MCF 10A (cell line): ENCODE measurements at regions of chr1 and their contacts with region 1.

Region 1: GRCh38 chr1:203038891-203039608 is 12.8 kb downstream of the PPFIA4 start:
- DNase-seq: peak; percentile 90
- H3K4me3 Mint-ChIP-seq: no peak overlapping the region
- H3K27ac Mint-ChIP-seq: no peak overlapping the region
- H3K4me1 Mint-ChIP-seq: peaks cover 18% of the 10 kb centered on the region
- H3K27me3 Mint-ChIP-seq: no peaks in the 10 kb centered on the region
- CTCF ChIP-seq: peak; percentile 100

Region 2: GRCh38 chr1:202553560-202554038 is 485.5 kb before region 1 on chr1:
- CTCF ChIA-PET with region 1: no interaction called
- POLR2A ChIA-PET with region 1: no interaction called
- intact Hi-C with region 1: no loop called
- DNase-seq: no peak
- H3K4me3 Mint-ChIP-seq: no peak overlapping the region
- H3K27ac Mint-ChIP-seq: no peak overlapping the region
- H3K4me1 Mint-ChIP-seq: peaks cover 5% of the 10 kb centered on the region
- H3K27me3 Mint-ChIP-seq: no peaks in the 10 kb centered on the region
- CTCF ChIP-seq: no peak

Region 3: GRCh38 chr1:203069030-203069747 is 30.1 kb after region 1 on chr1:
- CTCF ChIA-PET with region 1: interaction called, 250 read pairs
- POLR2A ChIA-PET with region 1: interaction called, 3 read pairs
- intact Hi-C with region 1: no loop called
- DNase-seq: no peak
- H3K4me3 Mint-ChIP-seq: no peak overlapping the region
- H3K27ac Mint-ChIP-seq: no peak overlapping the region
- H3K4me1 Mint-ChIP-seq: peaks cover 20% of the 10 kb centered on the region
- H3K27me3 Mint-ChIP-seq: peaks cover 10% of the 10 kb centered on the region
- CTCF ChIP-seq: no peak

Region 4: GRCh38 chr1:203117611-203118575 is 78.8 kb after region 1 on chr1:
- CTCF ChIA-PET with region 1: interaction called, 103 read pairs
- POLR2A ChIA-PET with region 1: interaction called, 4 read pairs
- intact Hi-C with region 1: loop called (anchors 2 kb)
- DNase-seq: peak; percentile 85
- H3K4me3 Mint-ChIP-seq: no peak overlapping the region
- H3K27ac Mint-ChIP-seq: no peak overlapping the region
- H3K4me1 Mint-ChIP-seq: peaks cover 10% of the 10 kb centered on the region
- H3K27me3 Mint-ChIP-seq: peaks cover 42% of the 10 kb centered on the region
- CTCF ChIP-seq: peak; percentile 99

Region 5: DNA sequence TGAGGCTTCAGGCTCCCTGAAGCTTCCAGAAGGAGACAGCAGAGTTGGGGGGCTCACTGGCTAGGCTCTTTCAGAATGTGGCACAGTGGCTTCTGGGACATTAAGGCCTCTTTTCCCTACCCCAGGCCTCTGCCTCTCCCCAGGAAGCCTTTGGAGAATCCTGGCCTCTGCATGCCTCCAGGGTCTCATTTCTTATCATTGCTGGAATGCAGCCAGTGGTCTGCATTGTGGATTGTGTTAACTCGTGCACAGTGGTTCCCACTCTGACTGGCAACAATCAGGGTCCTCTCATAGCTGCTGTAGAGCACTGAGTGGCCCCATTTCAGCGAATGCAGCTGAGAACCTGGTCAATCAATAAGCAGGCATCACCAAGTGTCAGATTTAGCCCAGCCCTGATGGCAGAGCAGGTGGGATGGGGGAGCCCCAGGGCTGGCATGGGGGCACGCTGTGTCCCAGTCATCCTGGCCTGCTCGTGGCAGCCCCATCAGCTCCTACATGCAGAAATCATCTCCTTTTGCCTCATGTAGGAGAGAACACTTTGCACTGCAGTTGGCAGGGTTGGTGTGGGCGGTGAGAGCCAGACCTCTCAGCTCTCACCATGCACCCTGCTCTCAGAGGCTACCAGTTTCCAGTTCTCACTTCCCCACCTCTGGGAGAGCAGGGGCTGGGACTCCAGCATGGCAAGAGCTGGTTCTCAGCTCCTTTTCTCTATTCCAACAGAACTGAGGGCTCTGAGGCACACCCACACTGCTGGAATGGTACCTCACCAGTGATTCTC is 101.9 kb after region 1 on chr1:
- CTCF ChIA-PET with region 1: interaction called, 17 read pairs
- POLR2A ChIA-PET with region 1: no interaction called
- intact Hi-C with region 1: no loop called
- DNase-seq: no peak
- H3K4me3 Mint-ChIP-seq: no peak overlapping the region
- H3K27ac Mint-ChIP-seq: no peak overlapping the region
- H3K4me1 Mint-ChIP-seq: peaks cover 3% of the 10 kb centered on the region
- H3K27me3 Mint-ChIP-seq: no peaks in the 10 kb centered on the region
- CTCF ChIP-seq: no peak

Region 6: DNA sequence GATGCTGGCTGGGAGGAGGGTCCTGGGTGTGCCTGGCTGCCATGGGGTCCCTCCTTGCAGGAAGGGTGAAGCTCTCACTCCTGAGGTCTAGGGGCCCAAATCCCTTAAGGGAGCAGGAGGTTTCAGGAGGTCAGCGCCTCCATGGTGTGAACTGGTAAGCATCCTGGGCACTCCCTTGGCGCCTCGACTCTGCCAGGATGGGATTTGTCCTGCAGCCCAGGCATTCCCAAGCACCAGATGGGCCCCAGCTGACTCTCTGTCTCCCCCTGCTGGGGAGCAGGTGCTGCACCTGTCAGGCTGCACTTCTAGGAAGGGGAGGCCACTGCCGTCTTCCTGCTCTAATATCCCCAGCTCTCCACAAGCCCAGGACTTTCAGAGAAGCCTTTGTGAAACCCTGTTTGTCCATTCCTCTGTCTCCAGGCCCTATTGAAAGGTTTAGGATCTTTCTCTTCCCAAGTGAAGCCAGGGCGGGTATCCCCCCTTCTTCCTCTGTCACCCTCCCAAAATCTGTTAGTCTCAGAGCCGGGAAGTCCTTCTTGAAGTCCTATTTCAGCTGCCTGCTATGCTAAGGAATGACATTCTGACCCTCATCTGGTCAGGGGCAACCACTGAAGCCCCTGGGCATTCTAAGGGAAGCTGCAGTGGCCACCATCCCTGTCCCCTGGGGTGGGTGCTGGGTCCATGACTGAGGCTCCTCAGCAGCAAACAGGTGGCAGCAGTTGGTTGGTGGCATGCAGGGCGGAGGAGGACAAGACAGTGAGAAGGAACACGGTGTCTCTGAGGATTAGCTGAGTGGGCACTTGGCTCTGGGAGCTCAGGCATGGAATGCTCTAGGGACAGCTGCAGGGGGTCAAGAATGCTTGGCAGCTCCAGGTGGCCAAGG is 133.3 kb after region 1 on chr1:
- CTCF ChIA-PET with region 1: interaction called, 334 read pairs
- POLR2A ChIA-PET with region 1: interaction called, 6 read pairs
- intact Hi-C with region 1: loop called (anchors 1 kb)
- DNase-seq: peak; percentile 89
- H3K4me3 Mint-ChIP-seq: no peak overlapping the region
- H3K27ac Mint-ChIP-seq: no peak overlapping the region
- H3K4me1 Mint-ChIP-seq: peaks cover 2% of the 10 kb centered on the region
- H3K27me3 Mint-ChIP-seq: peaks cover 18% of the 10 kb centered on the region
- CTCF ChIP-seq: peak; percentile 100

Region 7: GRCh38 chr1:203216274-203217138 is 177.5 kb after region 1 on chr1:
- CTCF ChIA-PET with region 1: interaction called, 702 read pairs
- POLR2A ChIA-PET with region 1: interaction called, 23 read pairs
- intact Hi-C with region 1: loop called (anchors 1 kb)
- DNase-seq: peak; percentile 89
- H3K4me3 Mint-ChIP-seq: no peak overlapping the region
- H3K27ac Mint-ChIP-seq: no peak overlapping the region
- H3K4me1 Mint-ChIP-seq: no peaks in the 10 kb centered on the region
- H3K27me3 Mint-ChIP-seq: peaks cover 33% of the 10 kb centered on the region
- CTCF ChIP-seq: peak; percentile 93

Region 8: DNA sequence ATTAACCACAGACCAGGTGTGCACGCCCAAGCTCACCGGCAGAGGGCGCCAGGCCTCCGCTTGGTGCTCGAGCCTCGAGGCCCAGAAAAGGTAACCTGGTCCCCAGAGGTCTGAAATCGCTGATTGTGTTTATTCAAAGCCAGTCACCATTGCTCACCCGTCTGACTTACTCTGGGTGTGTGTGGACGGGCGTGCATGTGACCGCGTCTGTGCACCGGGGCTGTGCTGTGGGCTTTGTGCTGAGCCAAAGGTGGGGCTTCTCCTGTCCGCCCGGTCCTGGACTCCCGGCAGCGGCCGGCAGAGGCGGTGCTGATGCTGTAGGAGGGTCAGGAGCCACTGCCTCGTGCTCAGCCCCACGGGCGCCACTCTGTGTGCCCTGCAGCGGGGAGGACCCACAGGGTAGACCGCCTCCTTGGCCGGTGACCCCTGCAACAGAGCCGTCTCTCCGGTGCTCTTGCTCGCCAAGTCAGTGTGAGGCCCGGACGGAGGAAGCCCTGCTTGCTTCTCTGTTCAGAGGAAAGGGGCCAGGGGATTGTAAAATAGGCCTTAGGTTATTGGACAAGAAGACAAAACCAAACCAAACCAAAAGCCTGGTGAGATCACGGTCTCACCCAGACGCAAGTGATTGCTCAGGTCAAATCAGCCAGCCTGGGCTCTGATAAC is 234.3 kb after region 1 on chr1:
- CTCF ChIA-PET with region 1: interaction called, 408 read pairs
- POLR2A ChIA-PET with region 1: interaction called, 20 read pairs
- intact Hi-C with region 1: loop called (anchors 1 kb)
- DNase-seq: peak; percentile 96
- H3K4me3 Mint-ChIP-seq: peak overlapping the region; percentile 28
- H3K27ac Mint-ChIP-seq: no peak overlapping the region
- H3K4me1 Mint-ChIP-seq: peaks cover 3% of the 10 kb centered on the region
- H3K27me3 Mint-ChIP-seq: no peaks in the 10 kb centered on the region
- CTCF ChIP-seq: peak; percentile 100